HepG2 (cell line): ENCODE measurements at regions of chr17 and their contacts with region 1.

Region 1: GRCh38 chr17:72631949-72632684 is 460.4 kb downstream of the SLC39A11 start:
- DNase-seq: peak; percentile 98
- ATAC-seq: peak; percentile 93
- H3K4me3 ChIP-seq: peak overlapping the region; percentile 41 to 68 (median 47)
- H3K27ac ChIP-seq: peak overlapping the region; percentile 51
- H3K4me1 ChIP-seq: peaks cover 56% of the 10 kb centered on the region
- H3K27me3 ChIP-seq: no peaks in the 10 kb centered on the region
- CTCF ChIP-seq: peak; percentile 70
- EP300 ChIP-seq: peak; percentile 79 to 96; a peak in 3 of 4 replicates
- POLR2A ChIP-seq: peak; percentile 49 to 74; a peak in 3 of 4 replicates
- RAD21 ChIP-seq: no peak; the same call in 1 of the 2 replicates

Region 2: GRCh38 chr17:72445055-72445991 is 186.8 kb before region 1 on chr17:
- CTCF ChIA-PET with region 1: no interaction called
- POLR2A ChIA-PET with region 1: no interaction called
- in situ Hi-C with region 1: no loop called
- intact Hi-C with region 1: no loop called
- DNase-seq: peak; percentile 84
- ATAC-seq: peak; percentile 55
- H3K4me3 ChIP-seq: peak overlapping the region in 1 of 3 experiments; percentile 48; a peak in 2 of 6 replicates
- H3K27ac ChIP-seq: peak overlapping the region; percentile 96
- H3K4me1 ChIP-seq: peaks cover 97% of the 10 kb centered on the region
- H3K27me3 ChIP-seq: no peaks in the 10 kb centered on the region
- CTCF ChIP-seq: no peak; the same call in 1 of the 2 replicates
- EP300 ChIP-seq: peak in 1 of 2 experiments; percentile 92; a peak in 2 of 4 replicates
- POLR2A ChIP-seq: peak in 1 of 2 experiments; percentile 16; a peak in 1 of 4 replicates
- RAD21 ChIP-seq: no peak

Region 3: DNA sequence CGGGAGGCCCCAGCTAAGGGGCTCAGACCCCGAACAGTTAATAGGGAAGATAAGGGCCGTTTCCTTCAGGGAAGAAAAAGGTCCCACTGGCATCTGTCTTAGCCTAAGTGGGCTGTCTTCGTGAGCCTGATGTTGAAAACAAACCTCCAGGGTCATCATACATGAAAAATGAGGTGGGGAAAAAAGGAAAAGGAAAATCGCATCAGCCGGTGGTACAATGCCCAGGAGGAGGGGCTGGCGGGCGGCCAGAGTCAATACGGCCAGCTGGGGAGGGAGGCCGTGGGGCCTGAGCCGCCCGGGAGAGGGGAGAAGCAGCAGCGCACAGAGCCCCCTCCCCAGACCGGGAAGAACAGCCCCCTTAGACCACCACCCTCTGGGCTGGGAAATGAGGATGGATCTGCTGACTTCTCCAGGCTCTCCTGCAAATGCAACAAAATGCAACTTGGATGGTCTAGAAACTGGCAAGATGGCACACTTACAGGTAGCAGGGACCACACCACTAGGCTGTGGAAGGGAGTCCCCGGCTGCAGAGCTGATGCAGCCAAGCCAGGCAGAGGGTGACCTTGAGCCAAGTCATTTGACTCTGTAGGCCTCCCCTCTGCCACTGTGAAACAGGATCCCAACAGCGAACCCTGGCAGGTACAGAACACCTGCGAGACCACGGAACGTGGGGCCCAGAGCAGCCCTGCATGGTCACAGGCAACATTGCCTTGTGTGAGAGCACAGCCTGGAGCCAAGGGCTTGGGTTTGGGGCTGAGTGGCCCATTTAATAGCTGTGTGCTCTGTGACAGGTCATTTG is 62.8 kb before region 1 on chr17:
- CTCF ChIA-PET with region 1: no interaction called
- POLR2A ChIA-PET with region 1: interaction called, 4 read pairs
- in situ Hi-C with region 1: no loop called
- intact Hi-C with region 1: loop called (anchors 5 kb)
- DNase-seq: peak; percentile 70
- ATAC-seq: peak; percentile 68
- H3K4me3 ChIP-seq: peak overlapping the region in 1 of 3 experiments; percentile 47; a peak in 2 of 6 replicates
- H3K27ac ChIP-seq: peak overlapping the region; percentile 37
- H3K4me1 ChIP-seq: peaks cover 95% of the 10 kb centered on the region
- H3K27me3 ChIP-seq: no peaks in the 10 kb centered on the region
- CTCF ChIP-seq: peak; percentile 57
- EP300 ChIP-seq: no peak
- POLR2A ChIP-seq: no peak
- RAD21 ChIP-seq: 0 out of 2 replicates have a peak, but pooled peaks have one; percentile 14

Region 4: GRCh38 chr17:72602517-72603419 is 29.3 kb before region 1 on chr17:
- CTCF ChIA-PET with region 1: no interaction called
- POLR2A ChIA-PET with region 1: interaction called, 11 read pairs
- in situ Hi-C with region 1: no loop called
- intact Hi-C with region 1: no loop called
- DNase-seq: no peak
- ATAC-seq: peak; percentile 70
- H3K4me3 ChIP-seq: peak overlapping the region; percentile 9 to 52 (median 11)
- H3K27ac ChIP-seq: no peak overlapping the region
- H3K4me1 ChIP-seq: peaks cover 54% of the 10 kb centered on the region
- H3K27me3 ChIP-seq: no peaks in the 10 kb centered on the region
- CTCF ChIP-seq: no peak
- EP300 ChIP-seq: no peak
- POLR2A ChIP-seq: no peak
- RAD21 ChIP-seq: no peak

Region 5: DNA sequence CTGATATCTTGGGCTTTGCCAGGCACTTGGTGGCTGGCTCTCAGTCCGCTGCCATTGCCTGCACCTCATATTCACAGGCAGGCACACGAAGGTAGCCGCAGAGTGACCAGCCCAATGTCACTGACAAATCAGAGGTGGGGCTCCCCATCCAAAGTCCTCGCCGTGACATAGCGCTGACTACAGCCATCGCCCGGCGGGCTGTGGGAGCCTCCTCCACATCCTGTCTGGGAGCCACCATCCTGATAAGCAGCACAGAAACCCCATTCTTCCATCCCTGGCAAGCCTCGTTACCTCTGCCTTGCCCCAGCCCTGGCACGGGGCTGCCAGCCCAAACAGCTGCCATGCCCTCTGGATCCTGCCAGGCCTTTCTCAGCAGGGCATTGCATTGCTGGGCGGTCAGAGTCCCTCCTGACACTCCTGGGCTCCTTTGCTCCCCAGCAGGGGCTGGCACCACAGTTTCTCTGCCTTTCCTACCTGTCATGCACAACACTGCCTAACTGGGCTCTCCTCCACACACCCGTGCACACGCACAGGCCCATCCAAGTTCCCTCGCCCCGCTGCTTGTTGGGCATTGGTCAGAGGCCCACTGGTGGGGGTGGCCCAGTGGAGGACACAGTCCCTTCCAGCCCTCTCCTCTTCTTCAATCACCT is 22.7 kb after region 1 on chr17:
- CTCF ChIA-PET with region 1: no interaction called
- POLR2A ChIA-PET with region 1: interaction called, 18 read pairs
- in situ Hi-C with region 1: no loop called
- intact Hi-C with region 1: loop called (anchors 2 kb)
- DNase-seq: peak; percentile 37
- ATAC-seq: peak; percentile 65
- H3K4me3 ChIP-seq: no peak overlapping the region
- H3K27ac ChIP-seq: no peak overlapping the region
- H3K4me1 ChIP-seq: peaks cover 26% of the 10 kb centered on the region
- H3K27me3 ChIP-seq: no peaks in the 10 kb centered on the region
- CTCF ChIP-seq: no peak
- EP300 ChIP-seq: no peak
- POLR2A ChIP-seq: no peak
- RAD21 ChIP-seq: no peak

Region 6: GRCh38 chr17:72683506-72684404 is 51.6 kb after region 1 on chr17:
- CTCF ChIA-PET with region 1: no interaction called
- POLR2A ChIA-PET with region 1: interaction called, 10 read pairs
- in situ Hi-C with region 1: no loop called
- intact Hi-C with region 1: loop called (anchors 1 kb)
- DNase-seq: peak; percentile 97
- ATAC-seq: peak; percentile 92
- H3K4me3 ChIP-seq: peak overlapping the region; percentile 24 to 63 (median 48); a peak in 5 of 6 replicates
- H3K27ac ChIP-seq: peak overlapping the region; percentile 57
- H3K4me1 ChIP-seq: peaks cover 57% of the 10 kb centered on the region
- H3K27me3 ChIP-seq: no peaks in the 10 kb centered on the region
- CTCF ChIP-seq: no peak; the same call in 1 of the 2 replicates
- EP300 ChIP-seq: peak; percentile 77 to 93; a peak in 3 of 4 replicates
- POLR2A ChIP-seq: 0 out of 4 replicates have a peak, but pooled peaks of 1 of the 2 experiments have one; percentile 33
- RAD21 ChIP-seq: no peak

Region 7: DNA sequence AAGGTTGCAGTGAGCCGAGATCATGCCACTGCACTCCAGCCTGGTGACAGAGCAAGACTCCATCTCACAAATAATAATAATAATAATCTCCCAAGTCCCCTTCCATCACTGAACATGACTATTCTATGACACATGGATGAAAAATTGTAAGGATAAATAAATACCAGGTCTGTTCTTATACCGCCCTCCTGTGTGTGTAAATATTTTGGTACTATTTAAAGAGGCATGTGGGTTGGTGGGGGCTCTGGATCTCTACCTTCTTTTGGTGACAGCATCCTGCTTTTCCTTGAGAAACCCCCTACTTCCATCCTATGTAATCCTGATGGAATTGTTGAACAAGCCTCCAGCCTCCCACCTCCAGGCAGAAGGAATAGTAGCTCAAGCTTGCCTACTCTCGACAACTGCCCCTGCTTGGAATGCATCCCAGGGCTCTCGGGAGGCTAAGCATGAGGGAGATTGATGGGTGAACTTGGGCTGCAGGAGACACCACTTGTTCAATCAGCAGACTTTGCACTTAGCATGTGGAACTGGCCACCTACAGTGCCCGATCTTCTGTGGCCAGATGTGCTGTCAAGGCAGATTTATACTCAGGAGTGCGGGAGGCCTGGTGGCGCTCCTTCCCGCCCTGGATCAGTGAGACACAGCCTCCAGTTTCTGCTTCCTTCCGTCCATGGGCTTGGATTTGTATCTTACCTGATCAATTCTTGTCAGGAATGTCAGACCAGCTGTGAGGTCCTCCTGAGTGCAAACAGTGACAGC is 173.0 kb after region 1 on chr17:
- CTCF ChIA-PET with region 1: no interaction called
- POLR2A ChIA-PET with region 1: no interaction called
- in situ Hi-C with region 1: no loop called
- intact Hi-C with region 1: no loop called
- DNase-seq: no peak
- ATAC-seq: no peak
- H3K4me3 ChIP-seq: no peak overlapping the region
- H3K27ac ChIP-seq: no peak overlapping the region
- H3K4me1 ChIP-seq: no peaks in the 10 kb centered on the region
- H3K27me3 ChIP-seq: no peaks in the 10 kb centered on the region
- CTCF ChIP-seq: no peak
- EP300 ChIP-seq: no peak
- POLR2A ChIP-seq: no peak
- RAD21 ChIP-seq: no peak